Activated CD4-positive, alpha-beta T cell treated with anti-CD3 and anti-CD28 coated beads for 36 hours (primary cell): ENCODE measurements at regions of chr5 and their contacts with region 1.

Region 1: DNA sequence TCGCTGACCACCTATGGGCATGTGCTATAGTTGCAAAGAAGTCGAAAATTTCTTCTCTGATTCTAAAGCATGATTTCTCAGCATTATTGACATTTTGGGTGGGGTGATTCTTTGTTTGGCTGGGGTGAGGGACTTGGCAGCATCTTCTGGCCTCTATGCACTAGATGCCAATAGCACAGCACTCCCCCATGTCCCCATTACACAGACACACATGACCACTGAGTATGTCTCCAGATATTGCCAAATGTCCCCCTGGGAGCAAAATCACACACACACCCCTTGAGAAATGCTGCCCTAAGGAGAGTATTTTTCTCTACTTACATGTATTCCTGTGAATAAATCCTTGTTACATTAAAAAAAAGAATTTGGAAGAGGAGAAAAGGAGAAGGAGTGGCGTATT is 89.1 kb downstream of the PDZD2 start:
- DNase-seq: no peak
- ATAC-seq: no peak
- H3K4me3 Mint-ChIP-seq: no peak overlapping the region
- H3K27ac Mint-ChIP-seq: no peak overlapping the region
- H3K4me1 Mint-ChIP-seq: peaks cover 4% of the 10 kb centered on the region
- H3K27me3 Mint-ChIP-seq: peaks cover 2% of the 10 kb centered on the region

Region 2: GRCh38 chr5:31738199-31738598 is 10.2 kb after region 1 on chr5:
- CTCF ChIA-PET with region 1: no interaction called
- POLR2A ChIA-PET with region 1: interaction called, 12 read pairs
- intact Hi-C with region 1: no loop called
- DNase-seq: no peak
- ATAC-seq: no peak
- H3K4me3 Mint-ChIP-seq: no peak overlapping the region
- H3K27ac Mint-ChIP-seq: no peak overlapping the region
- H3K4me1 Mint-ChIP-seq: no peaks in the 10 kb centered on the region
- H3K27me3 Mint-ChIP-seq: no peaks in the 10 kb centered on the region